Gastrocnemius medialis (tissue), 4 donors: ENCODE measurements at regions of chr10 and their contacts with region 1.

Region 1: GRCh38 chr10:68156373-68157185 is 47.3 kb downstream of the MYPN start:
- DNase-seq: peak in 1 of 2 donors; percentile 48
- ATAC-seq: peak in 1 of 2 donors; percentile 33
- H3K4me3 ChIP-seq: no peak overlapping the region
- H3K27ac ChIP-seq: peak overlapping the region; percentile 79 to 88 (median 85)
- H3K4me1 ChIP-seq: peaks cover 36 to 61% of the 10 kb centered on the region in 2 donors
- H3K27me3 ChIP-seq: no peaks in the 10 kb centered on the region
- CTCF ChIP-seq: peak; percentile 77 to 84 (median 81)
- POLR2A ChIP-seq: no peak

Region 2: GRCh38 chr10:67884313-67884841 is 272.2 kb before region 1 on chr10 and contains the start of gene SIRT1:
- in situ Hi-C with region 1: no loop called
- intact Hi-C with region 1: loop called (anchors 10 kb)
- DNase-seq: peak; percentile 97
- ATAC-seq: peak; percentile 86 to 88
- H3K4me3 ChIP-seq: peak within 1 kb of the TSS; percentile 74 to 98 (median 85)
- H3K27ac ChIP-seq: peak within 1 kb of the TSS; percentile 87 to 96 (median 94)
- H3K4me1 ChIP-seq: peaks cover 20 to 22% of the 10 kb centered on the region in 2 donors
- H3K27me3 ChIP-seq: no peaks in the 10 kb centered on the region
- CTCF ChIP-seq: peak in 1 of 5 experiments; percentile 27
- POLR2A ChIP-seq: peak; percentile 98
- total RNA-seq, gene SIRT1: 18.7 to 21.5 (median 19.9) TPM

Region 3: DNA sequence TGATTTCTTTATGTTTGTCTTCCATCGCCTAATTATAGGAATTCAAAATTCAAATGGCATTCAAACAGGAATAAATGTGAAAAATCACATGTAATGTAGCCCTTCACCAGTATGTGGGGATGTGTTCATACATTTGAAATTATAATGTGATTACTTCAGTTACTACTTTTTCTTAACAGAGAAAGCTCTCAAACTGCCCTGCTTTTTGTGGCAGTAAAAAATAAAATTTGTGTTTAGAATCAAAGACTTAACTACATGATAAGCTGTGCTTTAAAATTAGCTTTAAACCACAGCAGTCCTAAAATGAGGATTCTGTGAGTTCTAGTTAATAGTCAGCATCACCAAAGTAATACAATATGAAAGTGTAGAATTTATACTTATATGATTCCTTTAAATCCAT is 73.7 kb before region 1 on chr10:
- in situ Hi-C with region 1: loop called in 1 of 4 experiments (anchors 5 kb)
- intact Hi-C with region 1: loop called (anchors 1 kb)
- DNase-seq: no peak
- ATAC-seq: peak in 1 of 2 donors; percentile 38
- H3K4me3 ChIP-seq: no peak overlapping the region
- H3K27ac ChIP-seq: peak overlapping the region; percentile 53 to 94 (median 64)
- H3K4me1 ChIP-seq: peaks cover 36 to 37% of the 10 kb centered on the region in 2 donors
- H3K27me3 ChIP-seq: no peaks in the 10 kb centered on the region
- CTCF ChIP-seq: peak; percentile 39 to 68 (median 49)
- POLR2A ChIP-seq: no peak

Region 4: GRCh38 chr10:68088744-68089143 is 67.8 kb before region 1 on chr10:
- in situ Hi-C with region 1: loop called in 1 of 4 experiments (anchors 5 kb)
- intact Hi-C with region 1: loop called (anchors 1 kb)
- DNase-seq: no peak
- ATAC-seq: no peak
- H3K4me3 ChIP-seq: peak overlapping the region in 2 of 4 donors; percentile 51 to 54
- H3K27ac ChIP-seq: peak overlapping the region; percentile 83 to 94 (median 90)
- H3K4me1 ChIP-seq: peaks cover 22 to 41% of the 10 kb centered on the region in 2 donors
- H3K27me3 ChIP-seq: no peaks in the 10 kb centered on the region
- CTCF ChIP-seq: no peak
- POLR2A ChIP-seq: no peak